ENCODE measurements at regions of chr10 and their contacts with region 1.

Region 1: DNA sequence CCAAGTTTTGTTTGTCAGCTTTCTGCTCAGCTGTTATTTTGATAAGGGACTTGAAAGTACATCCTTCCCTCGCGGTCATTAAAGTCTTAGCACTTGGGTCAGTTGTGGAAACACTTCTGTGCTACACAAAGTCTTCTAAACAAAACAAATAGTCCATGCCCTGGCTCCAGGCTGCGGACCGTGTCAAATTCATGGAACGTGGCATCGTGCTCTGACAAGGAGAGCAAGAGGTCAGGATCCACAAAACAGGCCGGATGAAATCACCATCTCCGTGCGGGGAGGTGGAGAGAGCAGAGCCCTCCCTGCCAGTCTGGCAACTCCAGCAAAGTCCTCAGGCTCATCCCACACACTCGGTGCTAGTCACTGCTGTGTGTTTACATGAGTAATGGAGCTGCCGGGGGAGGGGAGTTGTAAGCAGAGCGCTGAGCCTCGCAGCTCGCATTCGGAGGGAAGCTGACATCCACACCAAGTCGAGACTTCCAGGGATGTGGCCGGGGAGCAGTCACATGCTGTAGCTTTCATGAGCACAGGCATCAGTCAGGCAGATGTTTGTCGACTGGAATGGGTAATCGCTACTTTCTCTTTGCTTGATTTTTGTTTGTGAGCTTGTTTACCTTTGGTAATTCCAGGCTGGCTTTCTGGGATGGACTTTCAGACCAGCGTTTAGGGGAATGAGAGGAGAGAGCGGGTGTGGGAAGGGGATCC is 147.6 kb downstream of the ARID5B start:
- DNase-seq: peak; percentile 71 to 84
- ATAC-seq: peak; percentile 74

Region 2: DNA sequence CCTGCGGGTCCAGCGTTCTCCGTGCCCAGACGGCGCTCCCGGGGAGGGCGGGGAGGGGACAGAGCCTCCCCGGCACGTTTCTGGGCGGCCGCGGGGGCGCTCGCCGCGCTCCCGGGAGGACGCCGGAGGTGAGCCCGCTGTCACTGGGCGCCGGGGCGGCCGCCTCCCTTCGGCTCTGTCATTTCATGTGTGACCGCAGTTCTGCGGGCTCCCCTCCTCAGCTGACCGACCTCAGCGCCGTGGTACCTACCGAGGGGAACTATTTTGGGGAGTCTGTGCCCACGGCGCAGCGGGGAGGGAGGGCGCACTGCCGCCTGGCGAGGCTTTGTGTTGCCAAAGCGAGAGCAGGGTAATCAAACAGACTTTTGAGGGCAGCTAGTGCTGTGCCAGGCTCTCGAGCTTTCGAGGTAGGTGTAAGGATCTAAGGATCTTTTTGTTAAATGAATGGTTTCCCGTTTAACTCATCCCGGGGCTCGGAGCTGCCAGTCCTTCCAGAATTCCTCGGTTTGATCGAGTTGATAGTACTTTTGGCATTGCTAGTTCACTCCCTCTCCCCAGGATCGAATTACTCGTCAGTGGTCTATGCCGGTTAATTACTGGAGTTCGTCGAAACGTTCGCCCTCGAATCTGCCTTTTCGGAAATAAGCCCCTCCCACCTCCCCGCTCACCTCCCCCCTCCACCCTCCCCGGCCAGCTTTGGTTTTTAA is 145.7 kb before region 1 on chr10:
- intact Hi-C with region 1: loop called in 1 of 2 experiments (anchors 10 kb)
- DNase-seq: peak; percentile 67 to 77
- ATAC-seq: peak; percentile 65

Region 3: GRCh38 chr10:62095181-62096071 is 46.4 kb after region 1 on chr10:
- intact Hi-C with region 1: loop called in 1 of 2 experiments (anchors 10 kb)
- DNase-seq: no peak
- ATAC-seq: peak; percentile 66

Measured in left colon (tissue), 2 donors.